Sciatic nerve (tissue), 2 donors: ENCODE measurements at regions of chr3 and their contacts with region 1.

Region 1: GRCh38 chr3:184371570-184372018 is 6.4 kb downstream of the THPO start:
- DNase-seq: peak; percentile 82
- ATAC-seq: peak; percentile 90

Region 2: GRCh38 chr3:184513276-184514170 is 141.9 kb after region 1 on chr3:
- intact Hi-C with region 1: loop called (anchors 10 kb)
- DNase-seq: peak; percentile 90
- ATAC-seq: peak; percentile 97

Region 3: DNA sequence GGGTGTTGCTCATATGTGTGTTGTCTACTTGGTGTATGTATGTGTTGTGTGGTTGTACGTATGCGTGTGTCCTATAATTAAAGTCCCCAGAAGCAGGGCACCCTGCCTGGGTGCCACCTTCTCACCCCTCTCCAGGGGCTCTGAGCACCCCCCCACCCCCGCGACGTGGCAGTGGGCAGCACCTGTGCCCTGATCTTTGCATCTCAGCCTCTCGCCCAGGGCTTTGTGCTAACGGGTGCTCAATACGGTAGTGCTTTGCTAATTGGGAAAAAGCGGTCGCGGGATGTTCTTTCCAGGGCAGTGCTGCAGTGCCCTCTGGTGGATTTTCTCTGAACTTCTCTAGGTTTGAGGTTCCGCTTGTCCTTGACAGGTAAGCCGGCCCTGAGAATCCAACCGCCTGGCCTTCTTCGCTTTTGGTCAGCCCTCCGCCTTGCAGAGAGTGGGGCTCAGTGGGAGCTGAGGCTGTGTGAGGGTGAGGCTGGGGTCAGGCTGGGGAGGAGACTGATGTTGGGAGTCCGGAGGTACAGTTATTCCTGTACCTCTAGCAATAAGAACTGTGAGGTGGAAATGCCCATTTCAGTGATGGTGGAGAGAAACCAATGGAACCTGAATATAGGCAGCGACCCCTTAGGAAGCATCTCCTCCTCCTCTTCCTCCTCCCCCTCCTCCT is 172.4 kb after region 1 on chr3:
- intact Hi-C with region 1: loop called (anchors 10 kb)
- DNase-seq: peak; percentile 82
- ATAC-seq: peak; percentile 68